ENCODE measurements at regions of chr12 and their contacts with region 1.

Region 1: GRCh38 chr12:119649202-119649808 is 18.6 kb upstream of the PRKAB1 start:
- DNase-seq: no peak
- H3K4me3 ChIP-seq: no peak overlapping the region
- H3K27ac ChIP-seq: no peak overlapping the region
- H3K4me1 ChIP-seq: no peaks in the 10 kb centered on the region
- H3K27me3 ChIP-seq: peaks cover 29% of the 10 kb centered on the region
- CTCF ChIP-seq: peak; percentile 86

Region 2: DNA sequence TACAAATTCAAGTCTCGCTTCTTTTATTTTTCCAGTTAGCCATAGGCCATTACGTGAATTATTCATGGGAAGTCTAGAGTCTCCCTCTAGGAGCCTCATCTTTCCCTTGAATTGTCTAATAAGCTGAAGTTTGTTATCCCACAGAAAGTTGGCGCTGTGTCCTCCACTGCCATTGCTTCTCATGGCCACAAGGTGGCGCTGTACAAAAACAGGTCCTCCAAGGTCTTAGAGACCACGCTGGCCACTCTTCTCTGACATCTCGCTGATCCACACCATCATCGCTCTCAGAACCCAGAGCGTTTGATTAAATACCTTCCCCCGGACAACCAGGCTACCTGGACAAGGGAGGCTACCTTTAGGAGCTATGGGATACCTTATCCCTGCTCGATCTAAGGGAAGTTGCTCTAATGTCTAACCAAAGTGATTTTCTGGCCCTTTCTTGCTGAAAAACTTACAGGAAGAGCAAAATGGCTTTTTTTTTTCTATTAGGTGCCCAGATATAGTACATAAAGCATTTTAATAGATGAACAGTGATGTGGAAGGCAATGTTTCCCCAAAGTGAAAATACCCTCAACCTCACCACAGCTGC is 204.8 kb before region 1 on chr12:
- CTCF ChIA-PET with region 1: no interaction called
- POLR2A ChIA-PET with region 1: no interaction called
- intact Hi-C with region 1: loop called (anchors 2 kb)
- DNase-seq: peak; percentile 21 to 49
- H3K4me3 ChIP-seq: no peak overlapping the region
- H3K27ac ChIP-seq: no peak overlapping the region
- H3K4me1 ChIP-seq: peaks cover 11% of the 10 kb centered on the region; the same call in 1 of the 2 replicates
- H3K27me3 ChIP-seq: peaks cover 5% of the 10 kb centered on the region; the same call in 1 of the 2 replicates
- CTCF ChIP-seq: peak; percentile 92

Region 3: DNA sequence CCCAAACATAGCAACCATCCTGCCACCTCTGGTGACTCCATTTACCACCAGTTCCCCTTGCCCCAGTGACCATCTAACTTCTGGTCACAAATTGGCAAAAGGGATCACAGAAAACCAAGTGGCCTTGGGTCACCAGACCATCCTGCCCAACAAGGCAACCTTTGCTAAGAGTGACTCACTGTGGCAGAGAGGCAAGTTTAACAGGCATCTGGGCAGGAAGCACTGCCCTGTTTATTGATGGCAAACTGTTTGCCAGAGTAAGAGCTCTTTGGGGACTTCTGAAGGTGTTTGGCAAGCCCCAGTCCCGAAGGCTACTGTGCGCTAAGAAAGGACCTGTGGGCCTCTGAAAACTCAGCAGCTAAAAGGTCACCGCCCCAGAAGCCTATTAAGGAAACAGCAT is 83.9 kb before region 1 on chr12:
- CTCF ChIA-PET with region 1: no interaction called
- POLR2A ChIA-PET with region 1: no interaction called
- intact Hi-C with region 1: loop called (anchors 10 kb)
- DNase-seq: peak in 1 of 2 experiments; percentile 54
- H3K4me3 ChIP-seq: no peak overlapping the region
- H3K27ac ChIP-seq: no peak overlapping the region
- H3K4me1 ChIP-seq: no peaks in the 10 kb centered on the region
- H3K27me3 ChIP-seq: no peaks in the 10 kb centered on the region
- CTCF ChIP-seq: no peak

Measured in PC-9 (cell line).